Activated B cell treated with CpG ODN at 0.5 μM for 24 hours (primary cell): ENCODE measurements at regions of chr21 and their contacts with region 1.

Region 1: GRCh38 chr21:43352568-43353281 is 74.2 kb downstream of the SIK1 start:
- DNase-seq: no peak
- ATAC-seq: peak; percentile 79
- H3K4me3 Mint-ChIP-seq: peak overlapping the region; percentile 57
- H3K27ac Mint-ChIP-seq: peak overlapping the region; percentile 95
- H3K4me1 Mint-ChIP-seq: peaks cover 41% of the 10 kb centered on the region
- H3K27me3 Mint-ChIP-seq: no peaks in the 10 kb centered on the region
- CTCF ChIP-seq: no peak

Region 2: GRCh38 chr21:42627527-42628289 is 725.0 kb before region 1 on chr21:
- CTCF ChIA-PET with region 1: no interaction called
- POLR2A ChIA-PET with region 1: no interaction called
- intact Hi-C with region 1: no loop called
- DNase-seq: no peak
- ATAC-seq: no peak
- H3K4me3 Mint-ChIP-seq: no peak overlapping the region
- H3K27ac Mint-ChIP-seq: no peak overlapping the region
- H3K4me1 Mint-ChIP-seq: peaks cover 3% of the 10 kb centered on the region
- H3K27me3 Mint-ChIP-seq: peaks cover 15% of the 10 kb centered on the region
- CTCF ChIP-seq: no peak

Region 3: DNA sequence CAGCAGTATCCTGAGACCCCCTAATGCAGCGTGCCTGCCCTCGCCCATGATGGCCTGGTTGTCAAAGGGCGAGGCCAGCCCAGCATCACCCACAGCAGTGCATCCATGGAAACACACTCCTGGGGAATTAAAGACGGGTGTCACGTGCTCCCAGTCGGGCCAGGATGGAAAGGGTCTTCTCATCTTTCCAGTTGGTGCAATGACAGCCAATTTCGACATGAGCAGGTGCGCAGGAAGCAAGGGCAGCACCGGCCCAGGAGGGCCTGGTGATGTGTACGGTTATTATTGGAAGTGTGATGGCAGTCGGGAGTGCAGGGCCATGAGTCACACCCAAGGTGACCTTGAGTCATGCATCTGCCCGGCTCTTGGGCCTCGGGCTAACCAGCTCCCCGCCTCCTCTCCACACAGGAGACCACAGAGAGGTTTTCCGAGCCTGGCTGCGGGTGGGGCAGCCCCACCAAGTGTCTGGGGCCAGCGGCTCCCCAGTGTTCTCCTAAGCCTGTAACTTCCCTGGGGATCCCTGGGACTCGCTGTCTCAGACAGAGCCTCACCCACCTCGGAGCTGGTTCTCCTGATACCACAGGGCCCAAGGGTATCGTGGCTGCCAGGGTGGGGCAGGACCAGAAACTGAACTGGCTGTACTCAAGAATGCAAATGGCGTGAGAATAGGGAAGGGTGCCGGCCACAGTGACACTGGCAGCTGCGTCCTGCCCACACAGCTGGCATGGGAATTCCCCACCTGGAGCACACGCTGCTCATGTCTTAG is 45.6 kb before region 1 on chr21:
- CTCF ChIA-PET with region 1: no interaction called
- POLR2A ChIA-PET with region 1: interaction called, 7 read pairs
- intact Hi-C with region 1: loop called (anchors 2 kb)
- DNase-seq: peak; percentile 39
- ATAC-seq: peak; percentile 71
- H3K4me3 Mint-ChIP-seq: peak overlapping the region; percentile 46
- H3K27ac Mint-ChIP-seq: peak overlapping the region; percentile 82
- H3K4me1 Mint-ChIP-seq: peaks cover 55% of the 10 kb centered on the region
- H3K27me3 Mint-ChIP-seq: peaks cover 13% of the 10 kb centered on the region
- CTCF ChIP-seq: no peak

Region 4: GRCh38 chr21:43369124-43369523 is 16.4 kb after region 1 on chr21:
- CTCF ChIA-PET with region 1: interaction called, 3 read pairs
- POLR2A ChIA-PET with region 1: interaction called, 11 read pairs
- intact Hi-C with region 1: no loop called
- DNase-seq: no peak
- ATAC-seq: peak; percentile 78
- H3K4me3 Mint-ChIP-seq: peak overlapping the region; percentile 8
- H3K27ac Mint-ChIP-seq: peak overlapping the region; percentile 25
- H3K4me1 Mint-ChIP-seq: peaks cover 37% of the 10 kb centered on the region
- H3K27me3 Mint-ChIP-seq: no peaks in the 10 kb centered on the region
- CTCF ChIP-seq: no peak